ENCODE measurements at regions of chr1 and their contacts with region 1.

Region 1: GRCh38 chr1:22704440-22705067 is 6.1 kb upstream of the EPHB2 start:
- DNase-seq: peak; percentile 94
- ATAC-seq: peak; percentile 92

Region 2: DNA sequence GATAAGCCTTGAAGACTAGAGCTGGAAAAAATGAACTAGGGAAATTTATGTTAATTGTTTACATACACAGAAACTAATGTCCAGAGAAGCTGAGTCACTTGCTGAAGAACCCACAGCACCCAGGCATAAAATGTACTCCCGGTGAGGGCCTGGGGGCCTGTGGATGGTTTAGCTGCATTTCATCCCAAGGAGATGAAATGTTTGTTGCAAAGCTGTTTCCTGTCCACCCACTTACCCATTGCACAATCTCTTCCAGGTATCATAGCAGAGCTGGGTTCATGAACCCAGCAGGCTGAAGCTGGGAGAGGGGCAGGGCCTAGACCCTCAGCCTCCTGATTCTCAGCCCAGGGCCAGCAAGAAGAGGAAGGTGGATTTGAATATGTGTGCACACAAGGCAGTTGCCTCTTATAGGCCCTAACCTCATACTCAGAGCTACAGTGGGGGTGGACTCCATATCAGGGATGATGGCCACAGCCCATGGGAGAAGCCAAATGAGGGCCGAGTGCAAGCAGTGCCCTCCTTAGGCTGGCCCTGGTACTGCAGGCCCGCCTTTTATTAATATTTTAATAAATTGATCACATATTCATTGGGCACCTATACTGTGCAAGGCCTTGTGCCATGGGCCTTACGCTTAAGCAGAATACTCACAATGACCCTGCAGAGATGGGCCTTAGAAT is 157.3 kb after region 1 on chr1:
- intact Hi-C with region 1: loop called (anchors 10 kb)
- DNase-seq: peak; percentile 69
- ATAC-seq: peak; percentile 85

Region 3: GRCh38 chr1:23593558-23594149 is 889.1 kb after region 1 on chr1:
- intact Hi-C with region 1: no loop called
- DNase-seq: no peak
- ATAC-seq: no peak